ENCODE measurements at regions of chr10 and their contacts with region 1.

Region 1: DNA sequence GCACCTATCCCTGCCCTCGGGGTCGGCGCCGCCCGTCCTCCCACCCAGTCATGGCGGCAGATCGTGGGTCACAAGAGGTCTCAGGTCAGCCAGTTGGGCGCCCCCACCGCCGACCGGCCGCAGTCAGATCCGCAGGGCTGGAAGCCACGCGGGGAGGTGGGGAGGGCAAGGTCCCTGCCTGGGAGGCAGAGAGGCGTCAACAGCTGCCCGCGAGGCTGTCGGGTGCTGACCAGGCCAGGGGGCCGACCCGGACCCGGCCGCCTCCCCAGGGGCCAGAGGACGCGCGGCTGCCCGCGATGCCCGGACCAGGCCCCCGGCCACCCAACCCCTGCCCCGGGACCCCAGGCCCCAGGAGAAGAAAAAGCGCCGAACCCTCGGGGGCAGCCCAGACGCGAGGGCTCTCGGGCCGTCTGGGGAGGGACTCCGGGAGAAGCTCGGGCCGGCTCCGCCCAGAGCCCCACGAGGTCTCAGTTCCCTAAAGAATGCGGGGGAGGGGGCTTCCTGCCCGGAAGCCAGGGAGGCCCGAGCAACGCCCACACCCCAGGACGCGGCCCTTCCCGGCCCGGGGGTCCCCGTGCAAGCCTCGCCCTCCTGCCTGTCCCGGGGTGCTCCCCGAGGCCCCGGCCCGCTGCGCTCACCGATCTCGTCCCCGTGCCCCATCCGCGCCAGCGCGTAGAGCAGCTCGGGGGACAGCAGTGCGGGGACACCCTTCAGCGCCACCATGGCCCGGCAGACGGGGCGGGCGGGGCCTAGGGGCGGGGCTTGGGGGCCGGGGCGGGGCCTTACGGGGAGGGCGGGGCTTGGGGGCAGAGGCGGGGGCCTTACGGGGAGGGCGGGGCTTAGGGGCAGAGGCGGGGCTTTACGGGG is at the start of gene FUOM:
- DNase-seq: peak; percentile 82
- ATAC-seq: peak; percentile 87
- H3K4me3 Mint-ChIP-seq: peak within 1 kb of the TSS; percentile 80
- H3K27ac Mint-ChIP-seq: peak within 1 kb of the TSS; percentile 69
- H3K4me1 Mint-ChIP-seq: peaks cover 31% of the 10 kb centered on the region
- H3K27me3 Mint-ChIP-seq: no peaks in the 10 kb centered on the region
- CTCF ChIP-seq: no peak
- total RNA-seq, gene FUOM: 37.2 and 39.1 TPM in 2 replicates

Region 2: GRCh38 chr10:133335246-133336117 is 22.0 kb before region 1 on chr10:
- CTCF ChIA-PET with region 1: no interaction called
- POLR2A ChIA-PET with region 1: interaction called, 8 read pairs
- intact Hi-C with region 1: loop called (anchors 2 kb)
- DNase-seq: peak; percentile 54
- ATAC-seq: peak; percentile 49
- H3K4me3 Mint-ChIP-seq: peak overlapping the region; percentile 65
- H3K27ac Mint-ChIP-seq: no peak overlapping the region
- H3K4me1 Mint-ChIP-seq: peaks cover 6% of the 10 kb centered on the region
- H3K27me3 Mint-ChIP-seq: peaks cover 7% of the 10 kb centered on the region
- CTCF ChIP-seq: no peak

Region 3: GRCh38 chr10:133373104-133373624 is 15.6 kb after region 1 on chr10 and contains the start of gene ECHS1:
- CTCF ChIA-PET with region 1: no interaction called
- POLR2A ChIA-PET with region 1: interaction called, 19 read pairs
- intact Hi-C with region 1: loop called (anchors 1 kb)
- DNase-seq: peak; percentile 96
- ATAC-seq: peak; percentile 96
- H3K4me3 Mint-ChIP-seq: peak within 1 kb of the TSS; percentile 83
- H3K27ac Mint-ChIP-seq: peak within 1 kb of the TSS; percentile 88
- H3K4me1 Mint-ChIP-seq: peaks cover 24% of the 10 kb centered on the region
- H3K27me3 Mint-ChIP-seq: no peaks in the 10 kb centered on the region
- CTCF ChIP-seq: no peak
- total RNA-seq, gene ECHS1: 37.7 and 39.4 TPM in 2 replicates

Region 4: DNA sequence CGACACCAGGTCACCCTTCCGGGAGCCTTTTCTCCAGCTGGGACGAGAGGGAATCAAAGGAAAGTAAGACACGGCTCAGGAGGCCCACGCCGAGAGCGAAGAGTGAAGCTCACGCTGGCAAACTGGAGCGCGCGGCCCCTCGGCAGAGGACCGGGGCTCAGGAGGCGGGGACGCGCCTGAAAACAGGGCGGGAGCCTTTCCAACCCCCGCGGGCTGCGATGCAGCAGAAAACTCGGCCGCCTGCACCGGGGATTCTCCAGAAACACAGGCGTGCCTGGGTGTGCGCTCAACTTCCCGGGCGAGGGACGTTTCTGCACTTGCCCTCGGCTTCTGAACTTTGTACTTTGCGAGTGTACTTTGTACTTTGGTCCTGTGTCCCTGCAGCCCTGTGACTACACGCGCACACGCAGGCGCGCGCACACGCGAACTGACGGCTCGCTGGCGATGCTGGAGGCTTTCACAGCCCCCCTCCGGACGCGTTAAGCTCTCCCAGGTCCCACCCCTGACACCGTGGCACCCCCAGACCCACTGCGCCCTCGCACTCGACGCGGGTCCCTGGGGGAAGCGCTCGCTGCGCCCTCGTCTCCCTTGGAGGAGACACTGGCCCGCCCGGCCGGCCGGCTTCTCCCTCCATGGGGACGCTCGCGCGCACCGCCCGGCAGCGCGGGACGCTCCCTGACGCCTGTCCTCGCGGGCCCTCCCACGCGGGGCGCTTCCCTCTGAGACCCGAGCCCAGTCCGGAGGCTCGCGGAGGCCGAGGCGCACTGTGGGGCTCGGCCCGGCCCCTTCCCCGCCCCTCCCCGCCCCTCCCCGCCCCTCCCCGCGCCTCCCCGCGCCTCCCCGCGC is 21.0 kb after region 1 on chr10:
- CTCF ChIA-PET with region 1: no interaction called
- POLR2A ChIA-PET with region 1: interaction called, 19 read pairs
- intact Hi-C with region 1: loop called (anchors 1 kb)
- DNase-seq: peak; percentile 70
- ATAC-seq: peak; percentile 48
- H3K4me3 Mint-ChIP-seq: peak overlapping the region; percentile 87
- H3K27ac Mint-ChIP-seq: peak overlapping the region; percentile 61
- H3K4me1 Mint-ChIP-seq: peaks cover 45% of the 10 kb centered on the region
- H3K27me3 Mint-ChIP-seq: no peaks in the 10 kb centered on the region
- CTCF ChIP-seq: no peak